MCF 10A (cell line): ENCODE measurements at regions of chr1 and their contacts with region 1.

Region 1: DNA sequence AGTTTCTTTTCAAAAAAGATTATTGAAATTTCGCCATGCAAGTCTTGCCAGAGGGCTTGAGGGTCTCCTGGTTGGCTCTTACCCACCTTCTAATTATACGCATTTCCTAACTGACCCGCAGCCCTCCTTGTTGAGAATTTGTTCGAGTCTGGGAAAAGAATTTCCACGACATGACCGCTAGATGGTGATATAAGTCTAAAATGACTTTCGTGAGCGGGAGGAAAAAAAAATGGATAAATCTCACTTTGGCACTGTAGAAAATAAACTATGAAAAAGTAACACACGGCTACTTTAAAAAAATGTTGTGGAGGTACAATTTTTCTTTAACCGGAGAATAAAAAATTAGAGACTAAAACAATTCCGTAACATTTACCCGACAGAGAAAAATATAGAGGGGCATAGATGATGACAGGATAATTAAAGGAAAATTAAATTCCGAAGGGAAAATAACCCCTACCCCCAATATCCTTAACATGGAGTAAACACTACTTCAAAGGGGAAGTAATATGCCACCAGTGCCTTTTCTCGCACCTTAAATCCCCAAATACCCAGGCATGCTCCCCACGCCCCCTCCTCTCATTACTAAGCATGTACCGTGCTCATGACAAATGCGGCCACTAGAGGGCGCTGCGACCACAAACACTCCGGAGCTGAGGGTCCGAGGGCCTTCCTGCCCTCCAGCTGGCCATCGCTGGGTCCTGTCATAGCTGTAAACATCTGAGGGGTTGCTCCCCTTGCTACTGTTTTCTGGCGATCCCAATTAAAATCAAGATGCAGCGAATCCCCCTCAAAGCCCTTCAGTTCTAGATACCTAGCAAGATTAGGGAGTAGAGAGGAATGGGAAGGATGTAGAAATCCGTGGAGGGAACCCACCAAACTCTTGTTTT is 266.9 kb downstream of the ASTN1 start:
- DNase-seq: peak; percentile 70
- H3K4me3 Mint-ChIP-seq: peak overlapping the region; percentile 63
- H3K27ac Mint-ChIP-seq: no peak overlapping the region
- H3K4me1 Mint-ChIP-seq: peaks cover 10% of the 10 kb centered on the region
- H3K27me3 Mint-ChIP-seq: peaks cover 64% of the 10 kb centered on the region
- CTCF ChIP-seq: peak; percentile 99

Region 2: GRCh38 chr1:176811511-176812288 is 85.9 kb before region 1 on chr1:
- CTCF ChIA-PET with region 1: no interaction called
- POLR2A ChIA-PET with region 1: no interaction called
- intact Hi-C with region 1: no loop called
- DNase-seq: no peak
- H3K4me3 Mint-ChIP-seq: no peak overlapping the region
- H3K27ac Mint-ChIP-seq: no peak overlapping the region
- H3K4me1 Mint-ChIP-seq: no peaks in the 10 kb centered on the region
- H3K27me3 Mint-ChIP-seq: no peaks in the 10 kb centered on the region
- CTCF ChIP-seq: no peak

Region 3: DNA sequence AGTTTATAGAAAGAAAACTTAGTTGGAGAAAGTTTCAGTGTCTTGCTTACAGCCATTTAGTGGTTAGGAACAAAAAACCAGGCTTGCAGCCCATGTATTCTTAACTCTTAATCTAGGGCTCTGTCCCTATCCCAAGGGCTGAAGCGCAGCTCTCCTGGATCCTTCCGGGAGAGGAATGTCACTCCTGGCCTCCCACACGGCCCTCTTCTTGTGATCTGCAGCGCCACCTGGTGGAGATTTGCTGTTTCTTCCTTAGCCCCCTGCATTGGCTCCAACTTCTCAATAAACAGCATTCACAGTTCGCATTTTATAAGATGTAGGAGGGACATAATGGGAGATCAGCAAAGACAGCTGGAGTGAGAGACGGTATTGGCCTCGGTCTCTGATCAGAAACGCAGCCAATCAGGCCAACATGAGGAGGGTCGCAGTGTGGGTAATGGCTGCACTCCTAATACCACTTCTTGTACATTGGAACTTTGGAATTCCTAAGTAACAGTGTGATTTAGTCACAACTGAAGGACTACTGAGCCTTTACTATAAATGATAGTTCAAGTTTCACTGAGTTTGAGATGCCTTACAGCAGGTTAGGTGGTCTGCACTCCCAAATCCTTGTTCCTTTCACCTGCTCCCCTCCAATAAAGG is 16.5 kb before region 1 on chr1:
- CTCF ChIA-PET with region 1: interaction called, 28 read pairs
- POLR2A ChIA-PET with region 1: no interaction called
- intact Hi-C with region 1: no loop called
- DNase-seq: peak; percentile 90
- H3K4me3 Mint-ChIP-seq: no peak overlapping the region
- H3K27ac Mint-ChIP-seq: no peak overlapping the region
- H3K4me1 Mint-ChIP-seq: no peaks in the 10 kb centered on the region
- H3K27me3 Mint-ChIP-seq: peaks cover 12% of the 10 kb centered on the region
- CTCF ChIP-seq: peak; percentile 95

Region 4: DNA sequence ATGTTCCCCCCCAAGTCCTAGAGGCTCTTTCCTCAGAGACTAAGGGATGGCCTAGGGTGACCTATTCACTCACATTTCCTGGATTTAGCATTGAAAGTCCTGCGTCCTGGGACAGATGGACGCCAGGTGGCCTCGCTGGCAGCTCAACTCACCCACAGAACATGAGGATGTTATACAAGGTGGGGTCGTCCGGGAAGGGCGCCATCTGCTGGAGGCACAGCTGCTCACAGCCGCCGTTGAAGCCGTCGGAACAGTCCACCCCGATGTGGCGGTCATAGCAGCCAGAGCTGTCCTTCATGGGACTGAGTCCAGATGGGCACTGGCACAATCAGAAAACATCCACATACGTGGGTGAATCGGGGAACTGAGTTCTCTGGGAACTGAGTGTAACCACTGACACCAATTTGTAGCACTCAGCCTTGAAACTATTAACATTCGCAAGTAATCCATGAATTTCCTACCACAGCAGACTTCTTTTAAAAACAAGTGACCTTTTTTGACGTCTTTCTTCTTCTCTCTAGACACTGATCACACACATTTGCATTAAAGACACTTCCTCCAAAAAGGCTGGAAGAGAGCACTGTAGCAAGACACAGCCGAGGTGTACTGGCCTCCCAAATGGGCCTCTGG is 51.6 kb after region 1 on chr1:
- CTCF ChIA-PET with region 1: interaction called, 4 read pairs
- POLR2A ChIA-PET with region 1: no interaction called
- intact Hi-C with region 1: loop called (anchors 1 kb)
- DNase-seq: peak; percentile 65
- H3K4me3 Mint-ChIP-seq: no peak overlapping the region
- H3K27ac Mint-ChIP-seq: no peak overlapping the region
- H3K4me1 Mint-ChIP-seq: no peaks in the 10 kb centered on the region
- H3K27me3 Mint-ChIP-seq: no peaks in the 10 kb centered on the region
- CTCF ChIP-seq: peak; percentile 77

Region 5: DNA sequence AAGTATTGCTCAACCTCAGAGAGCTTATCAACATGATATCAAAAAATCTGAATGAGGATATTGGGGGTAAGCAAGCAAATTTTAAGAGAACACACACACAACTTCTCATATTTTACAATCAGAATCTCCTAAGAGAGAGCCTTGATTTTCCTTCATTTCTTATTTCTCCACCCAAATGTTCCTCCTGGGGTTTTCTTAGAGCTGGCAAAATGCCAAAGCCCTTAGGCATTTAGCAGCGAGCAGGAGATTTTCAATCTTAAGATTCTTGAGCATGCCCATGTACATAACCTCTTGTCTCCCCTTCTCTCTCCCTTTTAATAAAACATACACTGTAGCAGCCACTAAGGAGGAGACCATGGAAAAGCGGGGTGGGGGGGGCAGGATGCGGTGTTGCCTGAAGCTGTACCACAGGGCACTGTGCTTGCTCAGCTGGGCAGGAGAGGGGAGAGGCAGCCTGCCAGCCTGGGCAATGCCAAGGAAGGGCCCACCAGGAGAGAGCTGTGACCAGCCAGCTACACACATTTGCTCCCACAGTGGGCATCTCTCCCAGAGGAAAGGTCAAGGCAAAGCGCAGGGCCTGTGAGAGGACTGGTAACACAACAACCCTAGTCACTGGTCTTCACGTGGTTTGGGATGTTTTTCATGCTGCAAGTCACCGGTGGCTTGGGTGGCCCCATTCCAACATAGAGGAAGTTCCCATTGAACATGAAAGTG is 277.5 kb after region 1 on chr1:
- CTCF ChIA-PET with region 1: interaction called, 150 read pairs
- POLR2A ChIA-PET with region 1: no interaction called
- intact Hi-C with region 1: no loop called
- DNase-seq: no peak
- H3K4me3 Mint-ChIP-seq: no peak overlapping the region
- H3K27ac Mint-ChIP-seq: no peak overlapping the region
- H3K4me1 Mint-ChIP-seq: no peaks in the 10 kb centered on the region
- H3K27me3 Mint-ChIP-seq: peaks cover 69% of the 10 kb centered on the region
- CTCF ChIP-seq: no peak

Region 6: GRCh38 chr1:177190308-177190970 is 292.8 kb after region 1 on chr1:
- CTCF ChIA-PET with region 1: interaction called, 150 read pairs
- POLR2A ChIA-PET with region 1: no interaction called
- intact Hi-C with region 1: no loop called
- DNase-seq: no peak
- H3K4me3 Mint-ChIP-seq: no peak overlapping the region
- H3K27ac Mint-ChIP-seq: no peak overlapping the region
- H3K4me1 Mint-ChIP-seq: no peaks in the 10 kb centered on the region
- H3K27me3 Mint-ChIP-seq: no peaks in the 10 kb centered on the region
- CTCF ChIP-seq: no peak

Region 7: GRCh38 chr1:177355595-177355994 is 458.0 kb after region 1 on chr1:
- CTCF ChIA-PET with region 1: interaction called, 101 read pairs
- POLR2A ChIA-PET with region 1: no interaction called
- intact Hi-C with region 1: loop called (anchors 1 kb)
- DNase-seq: peak; percentile 70
- H3K4me3 Mint-ChIP-seq: no peak overlapping the region
- H3K27ac Mint-ChIP-seq: no peak overlapping the region
- H3K4me1 Mint-ChIP-seq: no peaks in the 10 kb centered on the region
- H3K27me3 Mint-ChIP-seq: peaks cover 22% of the 10 kb centered on the region
- CTCF ChIP-seq: peak; percentile 55

Region 8: GRCh38 chr1:178282949-178283367 is 1385.4 kb after region 1 on chr1:
- CTCF ChIA-PET with region 1: interaction called, 3 read pairs
- POLR2A ChIA-PET with region 1: no interaction called
- intact Hi-C with region 1: loop called (anchors 5 kb)
- DNase-seq: peak; percentile 85
- H3K4me3 Mint-ChIP-seq: no peak overlapping the region
- H3K27ac Mint-ChIP-seq: peak overlapping the region; percentile 28
- H3K4me1 Mint-ChIP-seq: peaks cover 38% of the 10 kb centered on the region
- H3K27me3 Mint-ChIP-seq: no peaks in the 10 kb centered on the region
- CTCF ChIP-seq: peak; percentile 77